Activated CD8-positive, alpha-beta T cell treated with anti-CD3 and anti-CD28 coated beads for 36 hours (primary cell): ENCODE measurements at regions of chr12 and their contacts with region 1.

Region 1: GRCh38 chr12:49288412-49288853 is 6.5 kb upstream of the PRPH start:
- DNase-seq: peak; percentile 81
- ATAC-seq: peak; percentile 69
- H3K4me3 Mint-ChIP-seq: no peak overlapping the region
- H3K27ac Mint-ChIP-seq: no peak overlapping the region
- H3K4me1 Mint-ChIP-seq: no peaks in the 10 kb centered on the region
- H3K27me3 Mint-ChIP-seq: peaks cover 22% of the 10 kb centered on the region
- CTCF ChIP-seq: peak; percentile 95

Region 2: GRCh38 chr12:48957141-48958048 is 331.0 kb before region 1 on chr12 and contains the start of gene ARF3:
- CTCF ChIA-PET with region 1: no interaction called
- POLR2A ChIA-PET with region 1: no interaction called
- intact Hi-C with region 1: no loop called
- DNase-seq: peak; percentile 94
- ATAC-seq: peak; percentile 96
- H3K4me3 Mint-ChIP-seq: peak within 1 kb of the TSS; percentile 96
- H3K27ac Mint-ChIP-seq: peak within 1 kb of the TSS; percentile 87
- H3K4me1 Mint-ChIP-seq: peaks cover 25% of the 10 kb centered on the region
- H3K27me3 Mint-ChIP-seq: peaks cover 7% of the 10 kb centered on the region
- CTCF ChIP-seq: no peak
- total RNA-seq, gene ARF3: 58.3 to 67.6 TPM

Region 3: GRCh38 chr12:49304161-49304560 is 15.7 kb after region 1 on chr12:
- CTCF ChIA-PET with region 1: interaction called, 12 read pairs
- POLR2A ChIA-PET with region 1: no interaction called
- intact Hi-C with region 1: no loop called
- DNase-seq: no peak
- ATAC-seq: no peak
- H3K4me3 Mint-ChIP-seq: no peak overlapping the region
- H3K27ac Mint-ChIP-seq: no peak overlapping the region
- H3K4me1 Mint-ChIP-seq: no peaks in the 10 kb centered on the region
- H3K27me3 Mint-ChIP-seq: peaks cover 34% of the 10 kb centered on the region
- CTCF ChIP-seq: no peak

Region 4: GRCh38 chr12:49331380-49332222 is 43.2 kb after region 1 on chr12:
- CTCF ChIA-PET with region 1: interaction called, 40 read pairs
- POLR2A ChIA-PET with region 1: interaction called, 4 read pairs
- intact Hi-C with region 1: no loop called
- DNase-seq: peak; percentile 36
- ATAC-seq: peak; percentile 58
- H3K4me3 Mint-ChIP-seq: no peak overlapping the region
- H3K27ac Mint-ChIP-seq: no peak overlapping the region
- H3K4me1 Mint-ChIP-seq: peaks cover 3% of the 10 kb centered on the region
- H3K27me3 Mint-ChIP-seq: peaks cover 36% of the 10 kb centered on the region
- CTCF ChIP-seq: peak; percentile 56

Region 5: DNA sequence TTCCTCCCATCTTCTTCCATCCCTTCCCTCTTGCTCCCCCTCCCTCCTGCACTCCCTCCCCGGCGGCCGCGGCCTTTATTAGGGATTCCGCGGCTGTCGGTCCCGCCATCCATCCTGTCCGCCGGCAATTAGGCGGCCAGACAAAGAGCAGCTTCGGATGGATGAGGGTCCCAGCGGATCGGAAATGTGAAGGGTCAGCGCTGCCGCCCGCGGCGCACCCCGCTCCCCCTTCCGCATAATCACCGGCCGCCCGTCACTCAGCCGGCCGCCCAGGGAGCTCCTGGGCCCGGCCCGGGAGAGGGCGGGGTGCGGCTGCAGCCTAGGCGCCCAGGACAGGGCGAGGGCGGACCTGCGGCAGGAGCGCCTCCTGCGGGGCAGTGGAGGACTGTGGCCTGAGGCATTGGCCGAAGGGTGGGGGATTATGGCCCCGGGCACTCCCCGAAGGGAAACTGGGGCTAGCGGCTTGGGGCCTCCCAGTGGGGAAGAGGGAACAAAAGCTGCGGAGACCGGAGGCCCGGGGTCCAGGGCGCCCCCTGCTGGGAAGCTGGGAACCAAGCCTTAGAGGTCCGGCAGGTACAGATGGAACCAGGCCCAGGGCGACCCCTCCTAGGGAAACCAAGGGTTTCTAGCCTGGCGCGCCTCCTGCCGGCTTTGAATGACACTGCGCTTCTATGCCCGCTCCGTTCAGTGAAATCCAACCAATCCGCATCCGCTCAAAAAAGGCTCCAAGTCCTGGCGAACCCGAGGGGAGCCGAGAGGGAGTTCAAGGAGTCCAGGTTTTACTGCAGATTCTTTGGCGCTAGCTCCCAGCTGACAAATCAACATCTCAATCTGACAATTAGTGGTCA is 53.9 kb after region 1 on chr12:
- CTCF ChIA-PET with region 1: interaction called, 145 read pairs
- POLR2A ChIA-PET with region 1: interaction called, 8 read pairs
- intact Hi-C with region 1: loop called (anchors 2 kb)
- DNase-seq: peak; percentile 93
- ATAC-seq: peak; percentile 84
- H3K4me3 Mint-ChIP-seq: peak overlapping the region; percentile 53
- H3K27ac Mint-ChIP-seq: no peak overlapping the region
- H3K4me1 Mint-ChIP-seq: peaks cover 40% of the 10 kb centered on the region
- H3K27me3 Mint-ChIP-seq: peaks cover 69% of the 10 kb centered on the region
- CTCF ChIP-seq: peak; percentile 99

Region 6: GRCh38 chr12:49580572-49581535 is 292.4 kb after region 1 on chr12:
- CTCF ChIA-PET with region 1: interaction called, 10 read pairs
- POLR2A ChIA-PET with region 1: no interaction called
- intact Hi-C with region 1: no loop called
- DNase-seq: peak; percentile 76
- ATAC-seq: peak; percentile 90
- H3K4me3 Mint-ChIP-seq: no peak overlapping the region
- H3K27ac Mint-ChIP-seq: peak overlapping the region; percentile 7
- H3K4me1 Mint-ChIP-seq: peaks cover 15% of the 10 kb centered on the region
- H3K27me3 Mint-ChIP-seq: no peaks in the 10 kb centered on the region
- CTCF ChIP-seq: peak; percentile 77

Region 7: DNA sequence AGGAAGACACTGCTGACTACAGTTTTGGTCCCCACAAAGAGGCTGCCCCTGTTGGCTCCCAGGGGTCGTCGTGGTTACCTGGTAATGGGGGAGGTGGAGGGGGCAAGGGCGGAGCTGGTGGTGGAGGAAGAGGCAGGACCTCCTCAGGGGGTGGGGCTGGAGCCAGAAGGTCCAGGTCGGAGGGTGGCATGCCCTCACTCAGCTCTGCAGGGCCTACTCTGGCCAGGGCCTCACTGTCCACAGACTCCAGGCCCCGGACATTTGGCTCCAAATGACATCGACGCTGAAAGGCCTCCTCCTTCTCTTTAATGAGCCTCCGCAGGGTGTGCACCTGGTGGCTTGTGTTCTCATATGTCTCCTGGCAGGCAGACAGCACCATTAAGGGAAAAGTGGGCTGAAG is 363.4 kb after region 1 on chr12:
- CTCF ChIA-PET with region 1: no interaction called
- POLR2A ChIA-PET with region 1: no interaction called
- intact Hi-C with region 1: no loop called
- DNase-seq: no peak
- ATAC-seq: no peak
- H3K4me3 Mint-ChIP-seq: no peak overlapping the region
- H3K27ac Mint-ChIP-seq: no peak overlapping the region
- H3K4me1 Mint-ChIP-seq: peaks cover 12% of the 10 kb centered on the region
- H3K27me3 Mint-ChIP-seq: no peaks in the 10 kb centered on the region
- CTCF ChIP-seq: no peak